ENCODE measurements at regions of chr7 and their contacts with region 1.

Region 1: DNA sequence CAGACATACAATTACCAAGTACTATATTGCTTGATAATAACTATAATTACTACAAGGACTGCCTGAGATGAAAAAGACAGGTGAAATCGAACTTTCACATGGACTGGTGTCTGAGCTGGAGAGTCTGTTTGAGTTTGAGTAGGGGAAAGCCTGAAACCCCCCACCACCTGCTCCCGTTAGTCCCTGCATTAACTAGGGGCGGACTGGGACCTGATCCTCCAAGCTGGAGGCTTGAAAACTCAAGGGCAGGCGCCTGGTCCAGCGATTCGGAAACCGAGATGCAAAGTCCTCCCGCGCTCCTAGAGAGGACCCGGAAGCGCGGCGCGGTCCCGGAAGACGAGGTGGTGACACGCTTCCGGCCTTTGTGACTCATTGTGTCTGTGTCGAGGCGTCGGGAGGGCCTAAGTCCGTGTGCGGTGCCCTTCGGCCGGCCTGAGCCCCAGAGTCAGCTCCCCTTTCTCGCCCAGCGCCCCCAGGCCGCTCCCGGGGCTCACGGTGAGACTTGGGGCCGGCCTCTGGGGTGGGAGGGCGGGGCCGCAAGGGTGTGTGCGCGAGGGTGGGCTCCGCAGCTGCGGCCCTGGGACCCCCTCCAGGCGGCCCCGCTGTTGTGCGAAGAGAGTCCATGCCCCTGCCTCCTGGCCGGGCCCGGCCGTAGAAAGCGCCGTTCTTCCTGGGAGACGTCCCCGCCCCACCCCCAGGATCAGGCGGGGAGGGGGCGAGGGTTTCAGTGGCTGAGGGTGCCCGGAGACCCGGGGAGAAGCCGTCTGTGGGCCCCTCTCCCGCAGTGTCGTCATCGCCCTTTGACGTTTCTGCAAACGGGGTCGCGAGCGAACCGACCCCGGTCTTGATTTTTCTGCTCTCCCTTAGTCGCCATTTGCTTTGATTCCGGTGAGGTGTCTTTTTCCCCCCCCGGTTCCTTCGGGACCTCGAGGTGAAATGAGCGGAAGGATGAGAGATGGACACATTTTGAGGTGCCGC is at the start of gene ZKSCAN1:
- DNase-seq: peak; percentile 79 to 84
- ATAC-seq: peak; percentile 97
- H3K4me3 ChIP-seq: peak within 1 kb of the TSS; percentile 64 to 99 (median 94)
- H3K27ac ChIP-seq: peak within 1 kb of the TSS; percentile 92 to 99 (median 98)
- H3K4me1 ChIP-seq: peaks cover 15 to 22% of the 10 kb centered on the region in 2 donors
- H3K27me3 ChIP-seq: no peaks in the 10 kb centered on the region
- CTCF ChIP-seq: no peak
- POLR2A ChIP-seq: peak; percentile 85 to 87
- total RNA-seq, gene ZKSCAN1: 15.0 to 17.7 (median 15.5) TPM

Region 2: GRCh38 chr7:100081535-100082102 is 66.1 kb after region 1 on chr7 and contains the start of gene ZNF3:
- in situ Hi-C with region 1: no loop called
- intact Hi-C with region 1: loop called (anchors 1 kb)
- DNase-seq: peak; percentile 99
- ATAC-seq: peak; percentile 95 to 96
- H3K4me3 ChIP-seq: peak within 1 kb of the TSS; percentile 81 to 99 (median 87)
- H3K27ac ChIP-seq: peak within 1 kb of the TSS; percentile 86 to 96 (median 90)
- H3K4me1 ChIP-seq: peaks cover 22 to 24% of the 10 kb centered on the region in 2 donors
- H3K27me3 ChIP-seq: no peaks in the 10 kb centered on the region
- CTCF ChIP-seq: peak; percentile 93 to 98 (median 94)
- POLR2A ChIP-seq: peak; percentile 62 to 85
- total RNA-seq, gene ZNF3: 11.2 to 19.2 (median 16.1) TPM